Psoas muscle (tissue), 8 donors: ENCODE measurements at regions of chr13 and their contacts with region 1.

Region 1: DNA sequence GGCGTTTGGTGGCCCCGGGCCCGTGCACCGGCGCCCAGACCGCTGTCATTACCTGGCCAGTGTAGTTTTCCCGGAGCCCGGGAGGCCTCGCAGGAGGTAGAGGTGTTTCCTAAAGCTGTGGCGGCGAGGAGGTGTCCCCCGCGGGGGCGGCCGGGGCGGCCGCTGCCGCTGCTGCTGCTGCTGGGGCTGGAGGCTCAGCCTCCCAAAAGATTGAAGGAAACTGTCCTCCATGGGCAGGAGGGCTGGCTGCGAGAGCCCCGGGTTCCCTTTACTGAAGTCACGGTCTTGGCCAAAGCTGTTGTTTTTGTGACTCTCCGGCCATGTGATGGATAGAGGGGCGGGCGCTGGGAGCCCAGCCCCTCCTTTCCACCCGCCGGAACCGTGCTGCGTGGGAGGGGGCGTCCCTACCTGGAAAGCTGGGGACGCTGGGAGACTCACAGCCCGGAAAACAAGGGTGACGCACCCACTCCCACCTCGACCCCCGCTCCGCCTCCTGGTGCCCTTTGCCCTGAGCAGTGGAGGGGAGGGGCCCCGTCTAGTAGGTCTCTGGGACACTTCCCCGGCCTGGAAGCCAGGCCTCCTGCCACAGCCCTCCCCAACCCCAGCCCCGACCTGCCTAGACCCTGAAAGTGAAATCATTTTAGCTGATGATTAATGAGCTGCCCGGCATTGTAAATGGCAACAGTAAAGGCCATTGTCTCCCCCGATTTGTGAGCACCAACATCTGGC is at the start of gene N4BP2L1:
- DNase-seq: peak; percentile 71 to 83
- ATAC-seq: peak; percentile 53 to 65 (median 60)
- H3K4me3 ChIP-seq: peak within 1 kb of the TSS; percentile 84
- H3K27ac ChIP-seq: peak within 1 kb of the TSS; percentile 88
- H3K4me1 ChIP-seq: peaks cover 11% of the 10 kb centered on the region
- H3K27me3 ChIP-seq: no peaks in the 10 kb centered on the region
- CTCF ChIP-seq: no peak
- total RNA-seq, gene N4BP2L1: 2.7 to 7.3 (median 4.8) TPM

Region 2: GRCh38 chr13:31919971-31920726 is 507.9 kb before region 1 on chr13:
- intact Hi-C with region 1: no loop called
- DNase-seq: no peak
- ATAC-seq: no peak
- H3K4me3 ChIP-seq: no peak overlapping the region
- H3K27ac ChIP-seq: no peak overlapping the region
- H3K4me1 ChIP-seq: no peaks in the 10 kb centered on the region
- H3K27me3 ChIP-seq: no peaks in the 10 kb centered on the region
- CTCF ChIP-seq: no peak

Region 3: DNA sequence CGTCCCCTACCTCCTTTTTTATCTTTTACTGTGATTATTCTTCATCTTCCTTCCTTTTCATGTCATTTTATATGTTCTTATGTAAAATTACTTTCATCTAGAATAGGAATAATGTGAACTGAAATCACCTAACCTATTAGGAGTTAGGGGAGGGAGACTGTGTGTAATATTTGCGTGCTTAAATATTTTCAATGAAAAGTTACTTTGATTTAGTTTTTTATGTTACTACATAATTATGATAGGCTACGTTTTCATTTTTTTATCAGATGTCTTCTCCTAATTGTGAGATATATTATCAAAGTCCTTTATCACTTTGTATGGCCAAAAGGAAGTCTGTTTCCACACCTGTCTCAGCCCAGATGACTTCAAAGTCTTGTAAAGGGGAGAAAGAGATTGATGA is 30.1 kb before region 1 on chr13:
- intact Hi-C with region 1: no loop called
- DNase-seq: no peak
- ATAC-seq: no peak
- H3K4me3 ChIP-seq: no peak overlapping the region
- H3K27ac ChIP-seq: no peak overlapping the region
- H3K4me1 ChIP-seq: no peaks in the 10 kb centered on the region
- H3K27me3 ChIP-seq: no peaks in the 10 kb centered on the region
- CTCF ChIP-seq: no peak

Region 4: DNA sequence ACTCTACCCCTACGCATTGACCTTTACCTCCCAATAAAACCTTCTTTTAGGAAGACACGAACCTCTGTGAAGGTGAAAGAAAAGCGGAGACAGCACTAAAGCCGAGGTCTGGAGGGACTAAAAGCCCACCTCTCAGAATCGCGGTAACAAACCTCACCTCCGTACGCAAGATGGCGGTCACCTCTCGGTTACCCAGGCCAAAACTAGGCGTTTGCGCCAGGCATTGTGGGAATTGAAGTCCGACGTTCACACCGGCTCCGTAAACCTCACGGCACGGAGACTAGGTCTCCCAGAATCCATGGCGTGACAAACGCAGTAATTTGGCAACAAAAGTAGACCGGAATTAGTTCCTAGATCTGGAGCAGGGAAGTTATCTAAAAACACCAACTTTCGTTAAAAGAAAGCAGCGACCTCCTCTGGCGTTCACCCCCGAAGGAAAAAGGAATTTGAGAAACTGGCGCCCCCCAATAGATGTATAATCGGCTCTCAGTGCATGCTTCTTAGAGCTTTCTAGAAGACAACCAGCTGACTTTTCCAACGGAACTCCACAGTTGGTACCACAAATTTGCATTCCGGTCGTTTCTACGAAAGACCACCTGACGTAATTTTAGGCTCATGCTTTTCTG is 110.7 kb after region 1 on chr13 and contains the start of gene N4BP2L2:
- intact Hi-C with region 1: loop called (anchors 5 to 10 kb)
- DNase-seq: peak; percentile 91 to 96
- ATAC-seq: peak; percentile 95 to 97 (median 97)
- H3K4me3 ChIP-seq: peak within 1 kb of the TSS; percentile 83
- H3K27ac ChIP-seq: peak within 1 kb of the TSS; percentile 94
- H3K4me1 ChIP-seq: peaks cover 34% of the 10 kb centered on the region
- H3K27me3 ChIP-seq: no peaks in the 10 kb centered on the region
- CTCF ChIP-seq: no peak
- total RNA-seq, gene N4BP2L2: 102 to 153 (median 132) TPM